SK-N-SH (cell line): ENCODE measurements at regions of chr5 and their contacts with region 1.

Region 1: DNA sequence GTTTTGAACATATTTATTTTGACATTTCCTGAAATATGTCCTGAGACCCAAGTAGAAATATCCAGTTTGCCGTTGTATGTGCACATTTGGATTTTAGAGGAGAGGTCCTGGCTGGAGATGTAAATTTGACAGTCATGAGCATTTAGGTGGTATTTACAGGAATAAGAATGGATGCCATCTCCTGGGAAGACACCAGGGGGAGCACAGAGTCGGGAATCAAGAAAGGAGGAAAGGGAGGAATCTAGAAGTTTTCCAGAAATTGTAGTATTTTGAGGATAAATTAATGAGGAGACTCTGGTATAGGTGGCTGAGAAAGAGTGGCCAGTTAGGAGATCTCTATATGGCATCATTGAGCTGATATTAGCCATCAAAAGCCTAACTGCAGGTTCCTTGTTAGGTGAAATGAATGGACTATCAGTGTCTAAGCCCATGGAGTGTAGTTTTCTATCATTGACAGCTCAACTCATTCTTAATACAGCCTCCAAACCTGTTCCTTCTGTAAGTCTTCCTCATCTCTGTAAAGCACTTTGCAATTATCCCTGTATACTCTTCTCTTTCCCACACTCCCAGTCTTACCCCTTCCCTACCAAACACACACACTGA is 7.2 kb downstream of the GAPT start:
- DNase-seq: peak; percentile 37
- H3K4me3 ChIP-seq: no peak overlapping the region; a peak in 1 of 4 replicates
- H3K27ac ChIP-seq: no peak overlapping the region
- H3K4me1 ChIP-seq: no peaks in the 10 kb centered on the region; a peak in 1 of 4 replicates
- H3K27me3 ChIP-seq: no peaks in the 10 kb centered on the region; the same call in 1 of the 2 replicates
- CTCF ChIP-seq: peak; percentile 82
- EP300 ChIP-seq: no peak
- RAD21 ChIP-seq: peak; percentile 85

Region 2: GRCh38 chr5:58530942-58531490 is 32.6 kb after region 1 on chr5:
- CTCF ChIA-PET with region 1: interaction called, 12 read pairs
- POLR2A ChIA-PET with region 1: no interaction called
- DNase-seq: no peak
- H3K4me3 ChIP-seq: no peak overlapping the region
- H3K27ac ChIP-seq: no peak overlapping the region
- H3K4me1 ChIP-seq: no peaks in the 10 kb centered on the region
- H3K27me3 ChIP-seq: no peaks in the 10 kb centered on the region
- CTCF ChIP-seq: no peak
- EP300 ChIP-seq: no peak
- RAD21 ChIP-seq: no peak

Region 3: GRCh38 chr5:58818462-58818861 is 320.0 kb after region 1 on chr5:
- CTCF ChIA-PET with region 1: interaction called, 13 read pairs
- POLR2A ChIA-PET with region 1: no interaction called
- DNase-seq: no peak
- H3K4me3 ChIP-seq: no peak overlapping the region
- H3K27ac ChIP-seq: no peak overlapping the region; a peak in 1 of 4 replicates
- H3K4me1 ChIP-seq: peaks cover 0 to 9% of the 10 kb centered on the region in 2 experiments; a peak in 2 of 4 replicates
- H3K27me3 ChIP-seq: no peaks in the 10 kb centered on the region
- CTCF ChIP-seq: no peak
- EP300 ChIP-seq: no peak
- RAD21 ChIP-seq: no peak